ENCODE measurements at regions of chr3 and their contacts with region 1.

Region 1: DNA sequence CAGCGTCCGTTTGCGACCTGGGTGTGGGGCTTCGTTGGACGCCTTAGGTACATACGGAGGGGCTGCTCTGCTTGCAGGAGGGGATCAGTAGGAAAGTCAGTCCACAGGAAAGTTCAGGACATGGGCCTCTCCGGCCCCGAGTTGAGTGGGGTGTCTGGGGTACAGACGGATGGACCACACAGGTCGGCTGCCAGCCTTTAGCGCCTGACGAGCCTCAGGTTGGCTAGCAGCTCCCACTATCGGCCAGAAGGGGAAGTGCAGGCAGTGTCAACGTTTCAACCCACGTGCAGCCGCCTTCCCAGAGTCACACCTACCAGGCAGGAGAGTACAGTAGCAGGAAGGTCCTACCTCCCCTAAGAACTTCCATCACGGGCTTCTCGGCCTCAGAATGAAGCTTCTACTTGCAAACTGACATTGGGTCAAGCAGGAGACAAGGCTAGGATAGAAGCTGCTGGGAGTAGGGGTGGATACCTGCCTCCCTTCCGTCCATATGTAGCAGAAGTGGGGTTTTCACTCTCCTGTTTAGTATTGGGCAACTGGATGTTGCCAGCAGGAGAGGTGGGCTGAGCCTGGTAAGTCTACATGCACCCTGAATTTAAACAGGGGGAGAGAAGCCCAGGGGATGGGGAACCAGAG is 1.8 kb upstream of the SCN5A start:
- DNase-seq: peak; percentile 71
- H3K4me3 ChIP-seq: no peak overlapping the region
- H3K27ac ChIP-seq: no peak overlapping the region
- H3K4me1 ChIP-seq: peaks cover 10% of the 10 kb centered on the region
- H3K27me3 ChIP-seq: no peaks in the 10 kb centered on the region
- CTCF ChIP-seq: peak; percentile 93 to 100
- POLR2A ChIP-seq: no peak

Region 2: DNA sequence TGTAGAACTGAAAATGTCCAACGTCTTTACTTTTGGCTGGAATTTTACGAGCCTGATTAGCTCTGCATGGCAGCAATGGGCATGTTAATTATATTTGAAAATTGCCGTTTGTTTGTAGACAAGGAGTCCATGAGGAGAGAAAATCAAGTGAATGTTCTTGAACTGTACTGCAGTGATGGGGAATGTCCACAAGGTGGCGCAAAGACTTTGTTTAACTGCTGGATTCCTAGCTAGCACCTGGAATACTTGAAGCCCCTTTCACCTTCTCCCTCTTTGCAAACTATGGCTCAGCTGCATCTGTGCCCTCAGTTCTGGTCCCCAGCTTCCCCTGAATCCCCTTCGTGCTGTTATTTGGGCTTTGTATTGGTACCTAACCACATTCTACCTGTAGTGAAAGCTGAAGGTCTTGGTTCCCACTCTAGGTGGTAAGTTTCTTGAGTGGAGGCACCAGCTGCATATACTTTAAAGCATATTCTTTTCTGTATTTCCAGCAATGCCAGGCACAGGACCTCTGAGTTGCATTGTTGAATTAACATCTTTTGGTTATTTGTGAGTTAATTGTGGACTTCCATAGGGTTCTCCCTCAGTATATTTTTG is 129.8 kb before region 1 on chr3:
- CTCF ChIA-PET with region 1: interaction called, 455 read pairs
- POLR2A ChIA-PET with region 1: no interaction called
- dilution Hi-C with region 1: no loop called
- intact Hi-C with region 1: loop called (anchors 1 kb)
- DNase-seq: peak; percentile 81
- H3K4me3 ChIP-seq: no peak overlapping the region
- H3K27ac ChIP-seq: no peak overlapping the region
- H3K4me1 ChIP-seq: peaks cover 4% of the 10 kb centered on the region
- H3K27me3 ChIP-seq: no peaks in the 10 kb centered on the region
- CTCF ChIP-seq: peak; percentile 84
- POLR2A ChIP-seq: no peak

Region 3: DNA sequence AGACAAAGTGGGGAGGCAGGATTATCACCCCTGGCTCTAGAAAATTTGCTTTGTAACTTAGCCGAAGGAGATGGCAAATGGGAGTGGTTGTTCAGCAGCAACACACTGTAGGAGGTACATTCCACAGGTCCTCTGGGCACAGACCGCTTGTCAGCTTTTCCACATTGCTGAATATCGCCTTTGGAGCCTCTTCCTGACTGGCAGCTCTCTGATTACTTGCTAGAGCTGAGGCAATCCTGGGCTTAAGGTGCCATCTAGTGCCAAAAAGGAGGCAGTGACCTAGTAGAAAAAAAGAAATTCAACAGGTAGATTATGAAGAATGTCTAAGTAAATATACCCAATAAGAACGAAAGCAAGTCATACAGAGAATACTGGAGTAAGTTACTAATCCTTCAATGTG is 11.3 kb after region 1 on chr3:
- CTCF ChIA-PET with region 1: interaction called, 42 read pairs
- POLR2A ChIA-PET with region 1: no interaction called
- dilution Hi-C with region 1: no loop called
- intact Hi-C with region 1: no loop called
- DNase-seq: peak; percentile 58
- H3K4me3 ChIP-seq: no peak overlapping the region
- H3K27ac ChIP-seq: no peak overlapping the region
- H3K4me1 ChIP-seq: no peaks in the 10 kb centered on the region
- H3K27me3 ChIP-seq: peaks cover 16 to 19% of the 10 kb centered on the region in 2 experiments
- CTCF ChIP-seq: peak; percentile 41 to 52
- POLR2A ChIP-seq: no peak

Region 4: DNA sequence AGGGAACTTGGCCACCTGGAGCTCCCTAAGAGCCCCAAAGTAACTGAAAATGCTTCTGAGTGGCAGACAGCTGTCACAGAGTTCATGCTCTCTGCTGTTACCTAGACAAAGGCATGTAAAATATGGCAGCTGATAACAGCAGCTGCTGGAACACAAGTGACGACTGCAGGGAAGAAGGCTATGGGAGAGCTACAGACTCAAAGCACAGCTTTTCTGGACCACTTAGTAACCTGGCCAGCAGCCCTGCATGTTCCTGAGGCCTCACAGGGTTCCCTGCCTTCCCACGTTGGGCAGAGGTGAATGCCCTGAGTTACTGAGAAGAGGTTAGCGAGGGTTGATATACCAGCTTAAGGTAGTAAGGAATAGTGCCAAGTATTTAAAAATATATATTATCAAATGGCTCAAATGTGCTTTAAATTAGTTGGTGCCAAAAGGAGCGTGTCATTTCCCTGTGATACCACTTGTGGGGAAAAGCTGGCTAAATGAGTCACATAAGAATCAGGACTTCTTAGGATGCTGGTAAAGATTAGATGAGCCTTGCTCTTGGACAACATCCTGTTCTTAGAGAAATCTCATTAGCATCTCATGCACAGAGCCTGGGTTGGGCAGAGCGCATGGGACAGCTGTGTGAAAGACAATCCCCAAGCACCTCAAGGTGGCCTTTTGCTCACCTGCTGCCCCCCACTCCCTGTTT is 74.6 kb after region 1 on chr3:
- CTCF ChIA-PET with region 1: interaction called, 11 read pairs
- POLR2A ChIA-PET with region 1: no interaction called
- dilution Hi-C with region 1: no loop called
- intact Hi-C with region 1: loop called (anchors 5 kb)
- DNase-seq: peak; percentile 84
- H3K4me3 ChIP-seq: no peak overlapping the region
- H3K27ac ChIP-seq: peak overlapping the region; percentile 95
- H3K4me1 ChIP-seq: peaks cover 78% of the 10 kb centered on the region
- H3K27me3 ChIP-seq: no peaks in the 10 kb centered on the region
- CTCF ChIP-seq: no peak
- POLR2A ChIP-seq: no peak